ENCODE measurements at regions of chr2 and their contacts with region 1.

Region 1: DNA sequence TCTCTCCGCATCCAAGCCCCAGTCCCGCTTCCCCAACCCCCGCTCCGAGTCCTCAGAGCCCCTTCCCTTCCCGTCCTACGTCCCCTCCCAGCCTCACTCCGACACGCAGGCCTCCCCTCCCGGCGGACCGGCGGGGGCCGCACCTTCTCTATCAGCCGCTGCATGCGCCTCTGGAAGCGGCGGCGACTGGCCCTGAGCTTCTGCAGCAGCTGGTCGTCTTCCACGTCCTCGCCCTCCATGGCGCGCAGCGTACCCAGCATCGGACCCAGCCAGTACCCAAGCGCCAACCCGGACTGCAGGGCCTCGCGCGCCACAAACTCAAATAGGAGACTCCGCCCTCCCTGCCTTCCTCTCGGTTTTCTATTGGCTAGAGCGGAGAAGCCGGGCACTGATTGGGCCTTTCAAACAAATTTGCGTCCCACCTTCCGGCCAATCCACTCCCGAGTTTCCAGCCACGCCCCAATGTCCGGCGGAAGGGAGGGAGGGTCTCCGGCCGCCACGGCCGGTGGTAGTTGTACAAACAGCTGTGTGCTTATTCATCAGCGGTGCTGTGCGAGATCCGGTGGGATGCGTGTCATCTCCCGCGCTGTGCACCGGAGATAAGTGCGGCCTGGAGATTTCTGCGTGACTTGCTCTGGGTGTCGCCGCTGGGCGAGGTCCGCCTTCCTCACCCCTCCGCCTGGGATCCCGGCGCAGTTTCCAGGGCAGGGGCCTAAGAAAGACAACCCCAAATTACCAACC is at the start of gene HJURP:
- DNase-seq: peak; percentile 97
- ATAC-seq: peak; percentile 88
- H3K4me3 ChIP-seq: peak within 1 kb of the TSS; percentile 98
- H3K27ac ChIP-seq: peak within 1 kb of the TSS; percentile 66
- H3K4me1 ChIP-seq: peaks cover 26% of the 10 kb centered on the region
- H3K27me3 ChIP-seq: no peaks in the 10 kb centered on the region
- CTCF ChIP-seq: no peak
- total RNA-seq, gene HJURP: 31.7 and 37.0 TPM in 2 replicates

Region 2: DNA sequence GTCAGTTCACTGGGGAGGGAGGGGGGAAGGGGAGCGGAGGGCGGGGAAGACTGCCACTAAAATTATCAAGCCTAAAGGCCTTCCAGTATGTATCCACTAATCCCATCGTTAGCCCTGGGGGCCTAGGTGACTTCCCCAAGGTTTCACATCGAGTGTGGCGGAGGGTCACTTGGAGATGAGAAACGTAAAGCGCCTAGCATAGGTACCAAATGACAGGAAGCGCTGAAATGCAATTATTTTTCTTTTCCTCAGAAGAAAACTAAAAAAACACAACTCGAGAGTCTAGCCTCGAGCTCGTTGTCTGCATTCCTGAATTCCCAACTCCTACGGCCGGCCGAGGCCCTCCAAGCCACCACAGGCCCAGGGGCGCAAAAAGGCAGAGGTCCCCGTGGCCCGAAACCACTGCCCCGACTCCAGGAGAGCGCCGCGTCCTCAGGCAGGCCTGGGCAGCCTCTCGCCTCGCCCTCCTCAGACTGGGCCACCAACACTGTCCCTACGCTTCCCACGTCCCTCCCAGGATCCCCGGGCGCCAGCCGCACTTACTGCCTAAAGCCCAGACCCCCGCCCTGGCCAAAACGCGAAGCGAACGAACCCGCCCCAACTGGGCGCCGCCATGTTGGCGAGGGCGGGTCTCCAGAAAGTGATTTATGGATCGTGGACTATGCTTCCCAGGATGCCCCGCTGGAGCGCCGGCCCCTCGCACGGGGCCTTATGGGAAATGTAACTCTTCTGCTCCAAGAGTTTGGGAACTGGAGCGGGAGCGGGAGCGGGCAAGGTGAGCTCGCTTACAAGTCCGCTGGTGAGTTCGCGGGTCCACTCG is 288.1 kb before region 1 on chr2 and contains the start of gene USP40:
- CTCF ChIA-PET with region 1: no interaction called
- POLR2A ChIA-PET with region 1: interaction called, 11 read pairs
- intact Hi-C with region 1: no loop called
- DNase-seq: peak; percentile 91
- ATAC-seq: peak; percentile 97
- H3K4me3 ChIP-seq: peak within 1 kb of the TSS; percentile 95
- H3K27ac ChIP-seq: peak within 1 kb of the TSS; percentile 83
- H3K4me1 ChIP-seq: peaks cover 13% of the 10 kb centered on the region
- H3K27me3 ChIP-seq: no peaks in the 10 kb centered on the region
- CTCF ChIP-seq: no peak
- total RNA-seq, gene USP40: 32.1 and 32.3 TPM in 2 replicates

Region 3: GRCh38 chr2:233915128-233915527 is 60.7 kb after region 1 on chr2:
- CTCF ChIA-PET with region 1: no interaction called
- POLR2A ChIA-PET with region 1: no interaction called
- intact Hi-C with region 1: loop called (anchors 2 kb)
- DNase-seq: peak; percentile 47
- ATAC-seq: 0 out of 2 replicates have a peak, but pooled peaks have one; percentile 48
- H3K4me3 ChIP-seq: no peak overlapping the region
- H3K27ac ChIP-seq: no peak overlapping the region
- H3K4me1 ChIP-seq: peaks cover 4% of the 10 kb centered on the region
- H3K27me3 ChIP-seq: peaks cover 23% of the 10 kb centered on the region; the same call in 1 of the 2 replicates
- CTCF ChIP-seq: peak; percentile 58

Region 4: GRCh38 chr2:233928594-233929351 is 74.4 kb after region 1 on chr2:
- CTCF ChIA-PET with region 1: interaction called, 19 read pairs
- POLR2A ChIA-PET with region 1: no interaction called
- intact Hi-C with region 1: no loop called
- DNase-seq: peak; percentile 56
- ATAC-seq: no peak
- H3K4me3 ChIP-seq: no peak overlapping the region
- H3K27ac ChIP-seq: no peak overlapping the region
- H3K4me1 ChIP-seq: no peaks in the 10 kb centered on the region
- H3K27me3 ChIP-seq: no peaks in the 10 kb centered on the region
- CTCF ChIP-seq: peak; percentile 84

Measured in PC-3 (cell line).